Adrenal gland (tissue), 19 donors: ENCODE measurements at regions of chr4 and their contacts with region 1.

Region 1: GRCh38 chr4:8607603-8608481 is 15.3 kb downstream of the CPZ start:
- DNase-seq: peak in 3 of 7 donors; percentile 22 to 39 (median 29)
- H3K4me3 ChIP-seq: no peak overlapping the region
- H3K27ac ChIP-seq: no peak overlapping the region
- H3K4me1 ChIP-seq: no peaks in the 10 kb centered on the region
- H3K27me3 ChIP-seq: no peaks in the 10 kb centered on the region
- CTCF ChIP-seq: peak; percentile 53 to 93 (median 76)
- POLR2A ChIP-seq: no peak

Region 2: DNA sequence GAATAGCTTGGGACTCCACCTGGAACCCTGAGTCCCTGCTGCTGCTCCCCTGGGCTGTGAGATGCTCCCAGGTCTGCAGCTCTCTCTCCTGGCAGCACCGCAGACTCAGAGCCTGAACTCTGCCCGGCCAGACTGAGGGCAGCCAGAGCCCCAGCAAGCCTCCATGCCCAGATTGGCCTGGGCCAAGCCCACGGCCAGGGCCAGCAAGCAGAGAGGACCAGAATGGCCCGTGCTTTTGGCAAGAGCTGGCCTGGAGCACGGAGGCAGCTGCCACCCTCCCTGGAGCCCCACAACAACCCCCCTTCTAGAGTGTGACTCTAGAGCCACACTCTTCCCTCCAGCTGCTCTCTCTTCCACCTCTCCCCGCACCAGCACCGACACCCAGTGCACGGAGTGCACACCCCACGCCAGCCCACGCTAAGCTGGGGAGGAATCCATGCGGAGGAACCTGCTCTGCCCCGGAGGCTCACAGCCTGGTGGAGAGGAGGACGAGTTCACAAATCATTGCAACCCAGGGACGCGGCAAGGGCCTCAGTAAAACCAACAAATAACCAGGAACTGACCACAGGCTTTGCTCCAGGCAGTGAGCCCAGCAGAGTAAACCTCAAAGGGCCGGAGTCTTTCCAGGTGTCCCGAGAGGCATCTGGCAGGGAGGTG is 153.5 kb after region 1 on chr4:
- intact Hi-C with region 1: no loop called
- DNase-seq: no peak
- H3K4me3 ChIP-seq: no peak overlapping the region
- H3K27ac ChIP-seq: no peak overlapping the region
- H3K4me1 ChIP-seq: no peaks in the 10 kb centered on the region
- H3K27me3 ChIP-seq: no peaks in the 10 kb centered on the region
- CTCF ChIP-seq: no peak
- POLR2A ChIP-seq: no peak

Region 3: GRCh38 chr4:8886612-8887406 is 279.0 kb after region 1 on chr4:
- intact Hi-C with region 1: loop called in 1 of 2 experiments (anchors 10 kb)
- DNase-seq: no peak
- H3K4me3 ChIP-seq: no peak overlapping the region
- H3K27ac ChIP-seq: no peak overlapping the region
- H3K4me1 ChIP-seq: no peaks in the 10 kb centered on the region
- H3K27me3 ChIP-seq: peaks cover 28% of the 10 kb centered on the region
- CTCF ChIP-seq: peak in 1 of 6 experiments; percentile 17
- POLR2A ChIP-seq: no peak

Region 4: DNA sequence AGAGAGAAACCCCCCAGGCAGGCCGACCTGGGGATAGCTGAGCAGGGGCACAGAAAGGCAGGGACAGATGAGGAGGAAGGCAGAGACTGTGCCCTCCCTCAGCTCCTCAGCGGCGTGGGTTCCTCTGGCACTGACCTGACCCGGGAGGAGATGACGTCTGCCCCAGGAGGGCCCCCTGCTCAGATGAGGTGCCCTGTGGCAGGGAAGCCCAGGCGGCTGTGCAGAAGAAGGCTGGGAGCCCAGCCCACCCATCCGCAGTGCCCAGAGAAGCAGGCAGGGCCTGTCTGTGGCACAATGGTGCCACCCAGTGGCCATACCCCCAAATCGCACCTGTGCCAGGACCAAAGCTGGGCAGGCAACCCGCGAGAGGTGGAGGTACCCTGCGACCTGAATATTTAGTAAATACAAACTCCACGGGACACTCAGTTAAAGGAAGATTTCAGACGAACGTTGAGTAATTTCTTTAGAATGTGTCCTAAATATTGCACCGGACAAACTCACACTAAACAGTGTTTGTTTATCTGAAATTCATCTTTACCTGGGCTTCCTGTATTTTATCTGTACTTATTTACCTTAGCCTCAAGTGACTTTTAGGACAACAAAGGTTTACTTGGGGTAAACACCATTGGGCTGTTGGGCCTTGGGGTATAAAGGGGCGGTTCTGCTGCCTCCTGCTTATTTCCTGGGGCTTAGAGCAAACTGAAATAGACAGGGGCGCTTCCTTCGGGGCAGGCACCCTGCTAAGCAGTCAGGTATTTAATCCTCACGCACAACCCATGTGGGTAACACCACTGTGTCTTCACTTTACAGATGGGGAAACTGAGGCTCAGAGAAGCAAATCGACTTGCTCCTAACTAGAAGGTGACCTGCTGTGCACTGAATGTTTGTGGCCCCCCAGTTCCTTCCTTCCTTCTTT is 310.3 kb after region 1 on chr4:
- intact Hi-C with region 1: loop called (anchors 10 kb)
- DNase-seq: peak; percentile 35 to 72 (median 61)
- H3K4me3 ChIP-seq: no peak overlapping the region
- H3K27ac ChIP-seq: no peak overlapping the region
- H3K4me1 ChIP-seq: no peaks in the 10 kb centered on the region
- H3K27me3 ChIP-seq: peaks cover 10% of the 10 kb centered on the region
- CTCF ChIP-seq: peak; percentile 56 to 82 (median 73)
- POLR2A ChIP-seq: no peak